GM12878 (cell line): ENCODE measurements at regions of chr4 and their contacts with region 1.

Region 1: GRCh38 chr4:112910109-112910736 is 139.2 kb upstream of the ANK2 start:
- DNase-seq: no peak
- ATAC-seq: peak; percentile 76
- H3K4me3 ChIP-seq: peak overlapping the region; percentile 25; the same call in 1 of the 2 replicates
- H3K27ac ChIP-seq: no peak overlapping the region
- H3K4me1 ChIP-seq: no peaks in the 10 kb centered on the region
- H3K27me3 ChIP-seq: no peaks in the 10 kb centered on the region
- CTCF ChIP-seq: no peak
- EP300 ChIP-seq: no peak
- POLR2A ChIP-seq: no peak
- RAD21 ChIP-seq: no peak

Region 2: GRCh38 chr4:112775801-112776200 is 134.4 kb before region 1 on chr4:
- CTCF ChIA-PET with region 1: no interaction called
- POLR2A ChIA-PET with region 1: no interaction called
- RAD21 ChIA-PET with region 1: no interaction called
- SMC1A ChIA-PET with region 1: no interaction called
- in situ Hi-C with region 1: no loop called
- intact Hi-C with region 1: no loop called
- DNase-seq: no peak
- ATAC-seq: no peak
- H3K4me3 ChIP-seq: no peak overlapping the region
- H3K27ac ChIP-seq: no peak overlapping the region
- H3K4me1 ChIP-seq: no peaks in the 10 kb centered on the region
- H3K27me3 ChIP-seq: no peaks in the 10 kb centered on the region
- CTCF ChIP-seq: no peak
- EP300 ChIP-seq: no peak
- POLR2A ChIP-seq: no peak
- RAD21 ChIP-seq: no peak

Region 3: GRCh38 chr4:112853662-112854256 is 56.5 kb before region 1 on chr4:
- CTCF ChIA-PET with region 1: no interaction called
- POLR2A ChIA-PET with region 1: no interaction called
- RAD21 ChIA-PET with region 1: interaction called, 5 read pairs
- SMC1A ChIA-PET with region 1: interaction called, 10 read pairs
- in situ Hi-C with region 1: no loop called
- intact Hi-C with region 1: no loop called
- DNase-seq: no peak
- ATAC-seq: no peak
- H3K4me3 ChIP-seq: no peak overlapping the region
- H3K27ac ChIP-seq: no peak overlapping the region
- H3K4me1 ChIP-seq: no peaks in the 10 kb centered on the region
- H3K27me3 ChIP-seq: no peaks in the 10 kb centered on the region
- CTCF ChIP-seq: peak; percentile 24 to 44 (median 40); a peak in 4 of 6 replicates
- EP300 ChIP-seq: no peak
- POLR2A ChIP-seq: no peak
- RAD21 ChIP-seq: peak; percentile 52; the same call in 1 of the 2 replicates

Region 4: DNA sequence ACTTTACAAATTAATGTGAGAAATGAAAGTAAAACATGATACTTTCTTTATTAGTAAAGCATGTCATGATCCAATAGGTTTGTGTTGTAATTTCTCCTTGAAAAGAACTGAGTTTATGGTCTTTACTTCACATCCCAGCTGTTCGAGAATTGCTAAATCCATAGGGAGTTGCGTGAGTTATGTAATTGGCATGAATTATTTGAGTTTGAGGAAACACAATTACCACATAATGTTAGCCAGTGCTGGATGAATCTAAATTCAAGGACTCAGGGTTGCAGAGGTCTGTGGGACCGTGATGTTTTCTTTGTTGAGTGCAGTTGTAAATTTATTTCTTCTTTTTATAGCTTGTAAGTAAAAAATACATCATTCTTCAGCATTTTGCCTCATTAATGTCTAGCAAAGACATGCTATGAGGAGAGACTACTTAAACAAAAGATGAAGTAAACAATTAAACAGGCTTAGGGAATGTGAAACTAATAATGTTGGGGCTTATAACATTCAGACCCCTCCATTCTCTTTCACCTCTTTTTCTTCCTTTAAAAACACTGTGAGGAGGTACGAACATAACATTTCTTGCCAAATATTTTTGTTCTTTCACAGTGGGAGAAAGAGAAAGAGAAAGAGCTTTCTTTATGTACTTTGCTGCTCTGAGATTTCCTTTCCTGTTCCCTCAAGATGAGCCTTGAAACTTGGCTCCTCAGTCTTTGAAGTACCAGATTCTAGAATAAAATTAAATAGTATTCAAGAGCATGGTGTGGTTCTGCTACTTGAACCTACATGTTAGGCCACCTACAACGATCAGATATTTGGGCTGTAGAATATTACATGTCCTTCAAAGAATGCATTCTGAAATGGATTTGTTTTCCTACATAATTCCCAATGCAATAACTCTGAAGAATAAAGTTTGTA is 20.4 kb before region 1 on chr4:
- CTCF ChIA-PET with region 1: interaction called, 7 read pairs
- POLR2A ChIA-PET with region 1: interaction called, 3 read pairs
- RAD21 ChIA-PET with region 1: interaction called, 6 read pairs
- SMC1A ChIA-PET with region 1: interaction called, 13 read pairs
- in situ Hi-C with region 1: no loop called
- intact Hi-C with region 1: no loop called
- DNase-seq: peak; percentile 23
- ATAC-seq: peak; percentile 67
- H3K4me3 ChIP-seq: peak overlapping the region; percentile 42
- H3K27ac ChIP-seq: peak overlapping the region; percentile 41; the same call in 1 of the 2 replicates
- H3K4me1 ChIP-seq: peaks cover 4% of the 10 kb centered on the region
- H3K27me3 ChIP-seq: no peaks in the 10 kb centered on the region
- CTCF ChIP-seq: no peak
- EP300 ChIP-seq: no peak
- POLR2A ChIP-seq: no peak
- RAD21 ChIP-seq: no peak

Region 5: DNA sequence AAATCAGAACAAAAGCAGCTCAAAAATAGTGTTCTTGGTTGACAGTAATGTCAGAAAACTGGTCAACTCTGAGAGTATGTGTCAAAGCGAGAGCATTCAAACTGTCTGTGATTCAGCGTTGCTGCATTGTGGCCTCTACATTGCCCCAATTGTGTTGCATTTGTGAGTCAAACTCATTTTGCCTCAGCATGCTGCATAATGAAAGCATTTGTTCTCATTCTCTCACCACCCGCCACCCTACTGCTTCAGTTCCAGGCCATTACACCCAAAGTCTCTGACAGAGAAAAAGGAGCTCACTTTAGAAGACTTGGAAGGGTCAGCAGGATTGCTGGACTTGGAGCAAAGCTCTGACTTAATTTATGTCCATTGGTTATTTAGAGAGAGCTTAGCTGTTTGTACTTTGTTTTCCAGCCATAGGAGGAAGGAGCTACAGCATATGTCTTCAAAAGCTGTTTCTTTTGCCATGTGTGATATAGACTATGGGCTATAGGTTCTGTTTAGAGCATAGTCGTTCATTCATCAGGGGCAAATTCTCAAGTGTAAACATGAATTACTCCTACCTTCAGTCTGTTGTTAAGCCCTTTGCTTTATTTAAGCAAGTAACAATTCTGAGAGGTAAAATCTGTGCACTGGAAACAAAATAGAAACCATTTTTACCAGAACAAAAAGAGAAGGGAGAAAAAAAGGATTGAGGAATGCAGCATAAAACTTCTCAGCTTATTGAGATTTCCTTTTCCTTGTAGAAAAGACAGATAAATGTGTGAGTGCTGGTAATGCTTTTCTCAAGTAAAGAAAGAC is 14.2 kb before region 1 on chr4:
- CTCF ChIA-PET with region 1: interaction called, 30 read pairs
- POLR2A ChIA-PET with region 1: interaction called, 3 read pairs
- RAD21 ChIA-PET with region 1: interaction called, 7 read pairs
- SMC1A ChIA-PET with region 1: interaction called, 9 read pairs
- in situ Hi-C with region 1: no loop called
- intact Hi-C with region 1: no loop called
- DNase-seq: peak; percentile 31
- ATAC-seq: peak; percentile 84
- H3K4me3 ChIP-seq: no peak overlapping the region
- H3K27ac ChIP-seq: no peak overlapping the region
- H3K4me1 ChIP-seq: no peaks in the 10 kb centered on the region
- H3K27me3 ChIP-seq: no peaks in the 10 kb centered on the region
- CTCF ChIP-seq: no peak
- EP300 ChIP-seq: no peak
- POLR2A ChIP-seq: no peak
- RAD21 ChIP-seq: no peak

Region 6: DNA sequence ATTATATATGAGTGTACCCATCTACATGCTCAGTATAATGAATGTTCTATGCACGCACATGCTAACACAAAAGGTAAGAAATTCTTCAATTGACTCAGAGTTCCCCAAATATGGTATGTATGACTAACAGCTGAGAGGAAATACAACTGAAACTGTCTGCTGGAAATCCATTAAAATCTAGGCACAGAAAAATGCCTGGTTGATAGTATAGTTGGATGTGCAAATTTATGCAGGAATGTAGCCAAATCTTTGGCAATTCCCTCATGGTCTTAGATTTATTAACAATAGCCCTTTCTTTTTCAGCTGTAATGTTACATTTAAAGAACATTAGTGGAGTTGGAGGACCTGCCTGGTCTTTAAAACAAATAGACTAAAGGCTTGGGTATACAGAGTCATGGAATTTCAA is 845.8 kb after region 1 on chr4:
- CTCF ChIA-PET with region 1: no interaction called
- POLR2A ChIA-PET with region 1: no interaction called
- RAD21 ChIA-PET with region 1: no interaction called
- SMC1A ChIA-PET with region 1: no interaction called
- in situ Hi-C with region 1: no loop called
- intact Hi-C with region 1: no loop called
- DNase-seq: peak; percentile 51
- ATAC-seq: peak; percentile 72
- H3K4me3 ChIP-seq: peak overlapping the region; percentile 75; the same call in 1 of the 2 replicates
- H3K27ac ChIP-seq: peak overlapping the region; percentile 72
- H3K4me1 ChIP-seq: no peaks in the 10 kb centered on the region
- H3K27me3 ChIP-seq: no peaks in the 10 kb centered on the region
- CTCF ChIP-seq: no peak
- EP300 ChIP-seq: peak; percentile 84 to 95
- POLR2A ChIP-seq: no peak
- RAD21 ChIP-seq: no peak